PC-9 (cell line): ENCODE measurements at regions of chr4 and their contacts with region 1.

Region 1: GRCh38 chr4:1346781-1347409 is at the start of gene UVSSA:
- DNase-seq: peak; percentile 96 to 100
- H3K4me3 ChIP-seq: peak within 1 kb of the TSS; percentile 93
- H3K27ac ChIP-seq: peak within 1 kb of the TSS; percentile 73
- H3K4me1 ChIP-seq: peaks cover 30% of the 10 kb centered on the region
- H3K27me3 ChIP-seq: no peaks in the 10 kb centered on the region
- CTCF ChIP-seq: no peak
- total RNA-seq, gene UVSSA: 24.3 and 38.7 TPM in 2 replicates

Region 2: DNA sequence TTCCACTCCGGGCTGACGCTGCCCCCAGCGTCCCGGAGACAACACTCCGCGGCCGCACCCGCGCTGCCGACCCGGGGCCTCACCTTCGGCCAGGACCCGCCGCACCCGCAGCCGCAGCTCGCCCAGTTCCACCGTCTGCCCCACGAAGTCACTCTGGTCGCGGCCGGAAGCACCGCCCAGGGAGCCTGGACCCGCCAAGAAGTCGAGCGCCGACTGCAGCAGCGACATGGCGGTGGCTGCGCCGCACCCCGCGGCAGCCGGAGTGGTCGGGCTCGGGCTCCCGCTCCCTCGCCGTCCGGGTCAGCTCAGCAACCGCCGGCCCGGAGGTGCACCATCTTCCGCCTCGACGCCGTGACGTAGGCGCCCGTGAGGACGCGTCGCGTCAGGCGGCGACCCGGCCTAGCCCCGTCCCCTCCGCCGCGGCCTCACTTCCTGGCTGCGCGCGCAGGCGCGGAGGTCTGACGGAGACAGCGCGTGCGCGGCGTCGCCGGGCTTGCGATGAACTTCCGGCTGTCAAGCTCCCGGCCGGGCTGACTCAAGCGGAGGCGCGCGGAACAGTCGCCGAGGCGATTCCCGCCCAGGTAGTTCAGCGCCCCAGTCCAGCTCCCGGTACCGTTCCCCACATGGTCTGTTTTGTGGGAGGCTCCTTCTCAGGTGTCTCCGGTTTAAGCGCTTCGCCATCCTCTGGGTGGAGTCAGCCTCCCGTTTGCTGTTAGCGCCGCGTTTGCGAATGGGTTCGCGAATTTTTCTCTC is 414.8 kb before region 1 on chr4 and contains the starts of genes GAK and TMEM175:
- CTCF ChIA-PET with region 1: no interaction called
- POLR2A ChIA-PET with region 1: interaction called, 3 read pairs
- intact Hi-C with region 1: loop called (anchors 2 kb)
- DNase-seq: peak; percentile 86 to 97
- H3K4me3 ChIP-seq: peak within 1 kb of the TSS; percentile 96
- H3K27ac ChIP-seq: peak within 1 kb of the TSS; percentile 24
- H3K4me1 ChIP-seq: peaks cover 30% of the 10 kb centered on the region
- H3K27me3 ChIP-seq: no peaks in the 10 kb centered on the region
- CTCF ChIP-seq: no peak
- total RNA-seq, gene GAK: 114 and 138 TPM in 2 replicates
- total RNA-seq, gene TMEM175: 13.5 and 20.2 TPM in 2 replicates

Region 3: GRCh38 chr4:1130316-1131186 is 216.3 kb before region 1 on chr4:
- CTCF ChIA-PET with region 1: no interaction called
- POLR2A ChIA-PET with region 1: interaction called, 10 read pairs
- intact Hi-C with region 1: loop called (anchors 2 kb)
- DNase-seq: peak; percentile 60 to 63
- H3K4me3 ChIP-seq: no peak overlapping the region
- H3K27ac ChIP-seq: no peak overlapping the region
- H3K4me1 ChIP-seq: no peaks in the 10 kb centered on the region
- H3K27me3 ChIP-seq: peaks cover 22% of the 10 kb centered on the region; the same call in 1 of the 2 replicates
- CTCF ChIP-seq: peak; percentile 99

Region 4: DNA sequence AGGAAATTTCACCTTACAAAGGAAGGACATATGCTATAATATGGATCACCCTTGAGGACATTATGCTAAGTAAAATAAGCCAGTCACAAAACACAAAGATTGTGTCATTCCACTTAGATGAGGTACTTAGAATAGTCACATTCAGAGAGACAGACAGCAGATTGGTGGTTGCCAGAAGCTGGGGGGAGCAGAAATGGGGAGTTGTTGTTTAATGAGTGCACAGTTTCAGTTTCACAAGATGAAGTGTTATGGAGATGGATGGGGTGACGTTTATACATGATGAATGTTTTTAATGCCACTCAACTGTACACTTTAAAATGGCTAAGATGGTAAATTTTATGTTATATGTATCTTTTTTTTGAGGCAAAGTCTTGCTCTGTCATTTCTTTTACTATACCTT is 159.7 kb before region 1 on chr4:
- CTCF ChIA-PET with region 1: no interaction called
- POLR2A ChIA-PET with region 1: no interaction called
- intact Hi-C with region 1: no loop called
- DNase-seq: no peak
- H3K4me3 ChIP-seq: no peak overlapping the region
- H3K27ac ChIP-seq: no peak overlapping the region
- H3K4me1 ChIP-seq: peaks cover 7% of the 10 kb centered on the region
- H3K27me3 ChIP-seq: no peaks in the 10 kb centered on the region; the same call in 1 of the 2 replicates
- CTCF ChIP-seq: no peak

Region 5: DNA sequence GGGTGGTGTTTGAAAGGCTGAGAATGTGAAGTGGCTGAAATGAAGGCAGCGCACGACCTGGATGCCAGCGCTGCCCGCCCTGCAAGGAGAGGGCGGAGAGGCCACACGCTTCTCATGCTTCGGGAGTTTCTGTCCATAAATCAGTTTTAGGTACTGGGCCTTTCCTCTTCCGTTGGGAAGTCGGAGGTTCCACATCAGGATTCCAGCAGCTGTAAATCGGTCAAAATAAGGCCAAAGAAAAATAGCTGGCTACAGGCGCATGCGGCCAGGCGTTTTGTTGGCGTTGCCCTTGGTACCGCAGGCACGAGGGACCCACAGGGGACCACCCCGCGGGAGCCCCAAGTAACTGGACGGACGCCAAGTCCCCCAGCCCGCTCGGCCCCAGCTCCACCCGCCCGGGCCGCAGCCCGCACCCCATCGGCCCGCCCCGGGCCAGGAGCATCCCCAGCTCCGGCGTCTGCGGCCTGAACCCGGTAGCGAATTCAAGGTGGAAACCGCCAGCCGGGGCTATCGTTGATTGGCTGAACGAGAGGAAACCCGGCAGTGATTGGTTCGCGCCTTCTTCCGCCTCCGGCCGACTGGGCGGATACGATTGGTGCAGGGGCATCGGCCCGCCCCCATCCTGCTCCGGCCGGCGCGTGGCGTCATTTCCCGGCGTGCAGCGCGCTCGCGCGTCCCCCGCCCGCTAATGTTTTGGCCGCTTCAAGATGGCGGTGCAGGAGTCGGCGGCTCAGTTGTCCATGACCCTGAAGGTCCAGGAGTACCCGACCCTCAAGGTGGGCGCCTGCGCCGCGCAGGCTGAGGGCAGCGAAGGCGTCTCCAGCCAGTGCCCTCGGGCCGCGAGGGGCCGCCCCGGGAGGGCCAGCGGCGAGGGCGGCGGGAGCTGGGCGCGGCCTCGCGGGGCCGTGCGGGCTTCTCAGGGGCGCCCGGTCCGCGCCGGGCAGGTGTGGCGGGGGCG is 57.4 kb before region 1 on chr4 and contains the start of gene MAEA:
- CTCF ChIA-PET with region 1: no interaction called
- POLR2A ChIA-PET with region 1: no interaction called
- intact Hi-C with region 1: loop called (anchors 1 kb)
- DNase-seq: peak; percentile 90 to 97
- H3K4me3 ChIP-seq: peak within 1 kb of the TSS; percentile 77
- H3K27ac ChIP-seq: peak within 1 kb of the TSS; percentile 53
- H3K4me1 ChIP-seq: peaks cover 27% of the 10 kb centered on the region
- H3K27me3 ChIP-seq: no peaks in the 10 kb centered on the region
- CTCF ChIP-seq: no peak
- total RNA-seq, gene MAEA: 79.4 and 88.6 TPM in 2 replicates

Region 6: GRCh38 chr4:1474126-1475090 is 127.5 kb after region 1 on chr4:
- CTCF ChIA-PET with region 1: interaction called, 10 read pairs
- POLR2A ChIA-PET with region 1: no interaction called
- intact Hi-C with region 1: no loop called
- DNase-seq: no peak
- H3K4me3 ChIP-seq: no peak overlapping the region
- H3K27ac ChIP-seq: no peak overlapping the region
- H3K4me1 ChIP-seq: no peaks in the 10 kb centered on the region
- H3K27me3 ChIP-seq: peaks cover 44% of the 10 kb centered on the region
- CTCF ChIP-seq: no peak